ENCODE measurements at regions of chr15 and their contacts with region 1.

Region 1: DNA sequence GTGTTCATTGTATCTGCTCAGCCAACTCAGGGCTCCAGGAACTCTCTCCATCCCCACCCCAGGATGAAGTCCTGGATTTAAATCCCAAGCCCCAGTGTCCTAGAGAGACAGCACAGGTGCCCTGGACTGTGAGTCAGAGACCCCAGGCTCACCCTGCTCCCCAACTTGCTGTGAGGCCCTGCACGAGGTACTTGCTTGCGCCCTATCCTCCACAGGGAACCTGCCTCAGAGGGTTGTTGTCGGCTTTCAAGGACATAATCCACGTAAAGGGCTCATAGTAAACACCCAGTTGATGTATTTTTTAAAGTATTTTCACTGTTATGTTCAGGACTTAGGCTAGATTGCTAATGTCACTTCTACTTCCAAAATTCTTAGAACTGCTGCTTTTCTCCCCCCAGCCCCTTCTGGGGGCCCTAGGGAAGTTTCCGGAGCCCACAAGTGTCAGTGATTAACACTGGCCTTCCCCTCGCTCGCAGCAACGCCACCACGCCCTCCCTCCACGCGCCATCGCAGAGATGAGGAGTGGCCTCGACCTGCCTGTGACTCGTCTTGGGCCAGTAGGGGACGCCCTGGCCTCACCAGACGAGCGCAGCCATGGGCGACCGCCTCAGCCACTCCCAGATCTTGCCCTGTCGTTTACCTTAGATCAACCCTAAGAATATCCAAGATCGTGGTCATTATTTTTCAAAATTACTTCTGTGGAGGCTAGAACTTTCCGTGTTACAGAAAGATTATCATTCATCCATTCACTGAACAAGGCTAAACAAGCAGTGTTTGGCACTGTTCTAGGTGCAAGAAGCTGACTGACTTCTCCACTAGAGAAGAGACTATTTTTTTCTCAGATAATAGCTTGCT is 6.0 kb upstream of the SRP14 start:
- DNase-seq: peak; percentile 87
- H3K4me3 ChIP-seq: no peak overlapping the region
- H3K27ac ChIP-seq: peak overlapping the region; percentile 15
- H3K4me1 ChIP-seq: peaks cover 68% of the 10 kb centered on the region
- CTCF ChIP-seq: peak; percentile 97

Region 2: DNA sequence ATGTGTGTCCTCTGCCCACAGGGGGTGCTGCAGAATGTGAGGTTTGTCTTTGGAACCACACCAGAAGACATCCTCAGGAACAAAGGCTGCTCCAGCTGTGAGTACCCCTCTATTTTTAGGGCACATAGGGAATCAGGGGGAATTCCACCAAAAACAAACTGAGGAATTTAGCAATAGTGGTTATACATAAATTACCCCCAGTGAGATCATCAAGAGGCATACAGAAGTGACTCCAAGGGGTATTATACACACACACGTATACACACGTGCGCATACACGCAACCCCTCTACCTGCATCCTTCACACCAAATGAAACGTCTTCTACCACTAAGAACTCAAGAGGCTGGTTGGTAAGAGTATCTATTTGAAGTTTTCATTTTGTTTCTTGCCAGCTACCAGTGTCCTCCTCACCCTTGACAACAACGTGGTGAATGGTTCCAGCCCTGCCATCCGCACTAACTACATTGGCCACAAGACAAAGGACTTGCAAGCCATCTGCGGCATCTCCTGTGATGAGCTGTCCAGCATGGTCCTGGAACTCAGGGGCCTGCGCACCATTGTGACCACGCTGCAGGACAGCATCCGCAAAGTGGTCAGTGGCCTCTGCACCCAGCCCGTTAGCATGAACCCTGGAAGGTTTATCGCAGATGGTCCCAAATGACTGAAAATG is 461.2 kb before region 1 on chr15:
- CTCF ChIA-PET with region 1: no interaction called
- POLR2A ChIA-PET with region 1: no interaction called
- intact Hi-C with region 1: no loop called
- DNase-seq: no peak
- H3K4me3 ChIP-seq: no peak overlapping the region
- H3K27ac ChIP-seq: no peak overlapping the region
- H3K4me1 ChIP-seq: no peaks in the 10 kb centered on the region
- CTCF ChIP-seq: peak; percentile 55; the same call in 1 of the 2 replicates

Region 3: DNA sequence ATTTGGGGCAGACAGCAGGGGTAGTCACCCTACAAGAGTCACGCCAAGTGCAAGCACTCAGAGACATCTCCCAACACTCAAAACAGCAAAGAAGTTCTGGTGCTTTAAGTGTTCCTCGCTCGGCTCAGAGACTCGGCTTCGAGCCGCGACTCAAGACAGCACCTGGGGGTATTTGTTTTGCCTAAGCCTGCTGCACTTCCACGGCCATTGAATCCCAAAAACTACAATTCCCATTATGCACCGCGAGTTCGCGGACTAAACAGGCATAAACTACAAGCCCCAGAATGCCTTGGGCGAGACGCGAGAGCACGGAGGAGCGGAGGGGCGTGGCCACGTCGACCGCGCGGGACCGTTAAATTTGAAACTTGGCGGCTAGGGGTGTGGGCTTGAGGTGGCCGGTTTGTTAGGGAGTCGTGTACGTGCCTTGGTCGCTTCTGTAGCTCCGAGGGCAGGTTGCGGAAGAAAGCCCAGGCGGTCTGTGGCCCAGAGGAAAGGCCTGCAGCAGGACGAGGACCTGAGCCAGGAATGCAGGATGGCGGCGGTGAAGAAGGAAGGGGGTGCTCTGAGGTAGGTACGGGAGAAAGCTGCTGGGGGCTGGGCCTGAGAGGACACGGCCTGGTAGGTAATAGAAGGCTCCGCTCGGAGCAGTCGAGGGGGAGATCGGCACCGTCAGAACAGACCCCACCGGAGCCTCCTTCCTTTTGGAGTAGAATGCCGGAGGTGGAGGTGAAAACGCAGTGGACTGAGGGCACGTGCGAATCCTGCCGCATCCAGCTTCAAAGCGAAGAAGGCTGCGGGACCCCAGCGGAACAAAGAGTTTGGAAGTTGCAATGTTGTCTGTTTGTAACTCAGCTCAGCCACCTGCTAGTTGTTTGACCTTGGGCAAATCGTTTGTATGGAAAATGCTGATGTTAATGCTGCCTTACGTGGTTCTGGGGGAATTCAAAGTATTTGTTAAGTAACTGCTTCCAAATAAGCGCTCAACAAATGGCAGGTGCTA is 116.0 kb after region 1 on chr15 and contains the start of gene BUB1B:
- CTCF ChIA-PET with region 1: interaction called, 4 read pairs
- POLR2A ChIA-PET with region 1: interaction called, 9 read pairs
- intact Hi-C with region 1: loop called (anchors 1 kb)
- DNase-seq: peak; percentile 97
- H3K4me3 ChIP-seq: peak within 1 kb of the TSS; percentile 91
- H3K27ac ChIP-seq: peak within 1 kb of the TSS; percentile 68
- H3K4me1 ChIP-seq: peaks cover 28% of the 10 kb centered on the region
- CTCF ChIP-seq: no peak
- total RNA-seq, gene BUB1B: 192 and 215 TPM in 2 replicates

Region 4: GRCh38 chr15:40175160-40175559 is 130.2 kb after region 1 on chr15:
- CTCF ChIA-PET with region 1: no interaction called
- POLR2A ChIA-PET with region 1: no interaction called
- intact Hi-C with region 1: loop called (anchors 5 kb)
- DNase-seq: no peak
- H3K4me3 ChIP-seq: no peak overlapping the region
- H3K27ac ChIP-seq: no peak overlapping the region
- H3K4me1 ChIP-seq: no peaks in the 10 kb centered on the region
- CTCF ChIP-seq: no peak

Region 5: GRCh38 chr15:40217159-40217824 is 172.3 kb after region 1 on chr15:
- CTCF ChIA-PET with region 1: interaction called, 3 read pairs
- POLR2A ChIA-PET with region 1: interaction called, 8 read pairs
- intact Hi-C with region 1: loop called (anchors 2 kb)
- DNase-seq: peak; percentile 77
- H3K4me3 ChIP-seq: no peak overlapping the region
- H3K27ac ChIP-seq: no peak overlapping the region
- H3K4me1 ChIP-seq: no peaks in the 10 kb centered on the region
- CTCF ChIP-seq: peak; percentile 90

Measured in OCI-LY7 (cell line).